WTC11 (cell line): ENCODE measurements at regions of chr11 and their contacts with region 1.

Region 1: GRCh38 chr11:18791207-18791968 is at the start of gene PTPN5:
- DNase-seq: peak; percentile 64
- ATAC-seq: peak; percentile 63
- H3K4me3 Mint-ChIP-seq: peak within 1 kb of the TSS; percentile 83
- H3K27ac Mint-ChIP-seq: no peak within 1 kb of the TSS
- H3K4me1 Mint-ChIP-seq: peaks cover 11% of the 10 kb centered on the region
- H3K27me3 Mint-ChIP-seq: peaks cover 69% of the 10 kb centered on the region
- CTCF ChIP-seq: no peak
- total RNA-seq, gene PTPN5: 4.5 to 7.4 TPM (median 6.7 TPM) in 3 replicates

Region 2: DNA sequence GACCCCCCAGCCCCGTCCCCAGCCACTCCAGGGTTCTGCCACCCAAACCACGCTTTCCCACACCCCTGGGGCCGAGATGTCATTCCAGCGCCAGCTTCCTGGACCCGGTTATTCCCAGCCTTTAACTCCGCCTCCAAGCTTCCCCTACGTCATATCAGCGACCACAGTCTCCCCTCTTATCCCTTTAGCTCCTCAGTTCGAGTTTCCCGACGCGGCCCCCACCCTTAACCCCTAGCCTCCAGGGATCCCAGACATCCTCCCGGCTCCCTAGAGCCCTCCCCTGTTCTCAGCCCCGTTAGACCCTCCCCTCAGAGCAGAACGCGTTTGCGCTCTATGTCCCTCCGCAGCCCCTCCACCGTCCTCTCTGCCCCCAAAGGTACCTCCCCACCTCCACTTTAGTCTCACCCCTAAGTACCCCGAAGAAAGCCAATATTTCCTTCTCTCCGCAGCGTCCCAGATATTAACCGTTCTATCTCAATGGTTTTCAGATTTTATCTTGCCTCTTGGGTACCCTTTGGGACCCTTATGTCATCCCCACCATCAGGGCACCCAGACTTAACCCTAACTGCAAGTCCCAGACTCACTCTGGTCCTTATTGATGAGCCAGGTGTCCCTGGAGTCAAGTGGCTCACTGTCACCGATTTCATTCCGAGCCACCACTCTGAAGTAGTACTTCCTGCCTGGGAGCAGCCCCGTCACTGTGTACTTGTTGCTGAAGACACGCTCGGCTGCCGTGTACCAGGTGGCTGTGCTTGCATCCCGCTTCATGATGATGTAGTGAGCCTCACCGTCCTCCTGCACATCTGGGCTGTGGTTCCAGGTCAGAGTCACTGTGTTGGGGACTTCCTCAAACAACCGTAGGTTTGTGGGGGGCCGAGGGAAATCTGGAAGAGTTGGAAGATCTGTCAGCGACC is 84.8 kb before region 1 on chr11:
- CTCF ChIA-PET with region 1: no interaction called
- POLR2A ChIA-PET with region 1: no interaction called
- DNase-seq: peak; percentile 69
- ATAC-seq: peak; percentile 81
- H3K4me3 Mint-ChIP-seq: peak overlapping the region; percentile 79
- H3K27ac Mint-ChIP-seq: no peak overlapping the region
- H3K4me1 Mint-ChIP-seq: peaks cover 13% of the 10 kb centered on the region
- H3K27me3 Mint-ChIP-seq: peaks cover 67% of the 10 kb centered on the region
- CTCF ChIP-seq: no peak

Region 3: DNA sequence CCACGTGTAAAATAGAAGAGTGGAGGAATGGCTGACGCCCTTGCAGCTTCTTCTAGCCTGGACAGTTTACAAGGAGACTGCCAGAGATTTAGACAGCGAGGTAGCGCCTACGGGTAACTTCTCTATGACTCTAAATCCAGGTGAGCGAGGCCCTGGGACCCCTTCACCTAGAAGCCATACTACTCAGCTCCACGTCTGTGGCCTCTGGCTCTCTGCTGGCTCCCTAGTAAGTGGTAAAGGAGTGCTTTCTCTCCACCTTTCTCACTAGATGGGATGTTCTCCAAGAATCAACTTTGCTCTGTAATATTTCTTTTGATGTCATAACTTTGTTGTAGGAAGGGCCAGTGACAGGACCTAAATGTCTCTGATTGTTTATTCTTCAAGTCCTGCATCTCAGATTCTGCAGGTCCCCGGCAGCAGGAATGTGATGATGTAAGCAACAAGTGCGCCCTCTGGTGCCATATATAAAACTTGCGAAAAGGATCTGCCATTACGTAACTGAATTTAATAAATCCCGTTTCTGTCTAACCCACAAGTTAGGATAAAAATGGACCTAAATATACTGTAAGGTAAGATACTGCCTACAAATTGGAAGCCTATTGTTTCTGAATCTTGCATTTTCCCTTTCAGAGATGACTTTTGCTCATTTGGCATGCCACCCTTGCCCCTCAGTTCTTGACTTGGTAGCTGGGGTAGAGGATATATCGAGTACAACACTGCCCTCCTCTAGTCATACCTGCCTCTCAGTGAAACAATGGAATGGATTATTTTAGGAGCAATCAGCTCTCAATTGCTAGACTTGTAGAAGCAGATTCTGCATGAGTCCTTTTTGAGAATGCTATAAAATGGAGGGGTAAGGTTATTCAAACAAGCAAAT is 11.2 kb after region 1 on chr11:
- CTCF ChIA-PET with region 1: interaction called, 15 read pairs
- POLR2A ChIA-PET with region 1: no interaction called
- DNase-seq: peak; percentile 45
- ATAC-seq: peak; percentile 88
- H3K4me3 Mint-ChIP-seq: no peak overlapping the region
- H3K27ac Mint-ChIP-seq: no peak overlapping the region
- H3K4me1 Mint-ChIP-seq: peaks cover 2% of the 10 kb centered on the region; the same call in 1 of the 2 replicates
- H3K27me3 Mint-ChIP-seq: peaks cover 37% of the 10 kb centered on the region
- CTCF ChIP-seq: peak; percentile 18; the same call in 1 of the 2 replicates